Heart right ventricle (tissue), 16 donors: ENCODE measurements at regions of chr4 and their contacts with region 1.

Region 1: GRCh38 chr4:65393078-65393477 is 277.2 kb downstream of the EPHA5 start:
- DNase-seq: no peak
- ATAC-seq: no peak
- H3K4me3 ChIP-seq: no peak overlapping the region
- H3K27ac ChIP-seq: no peak overlapping the region
- H3K4me1 ChIP-seq: no peaks in the 10 kb centered on the region
- H3K27me3 ChIP-seq: no peaks in the 10 kb centered on the region
- CTCF ChIP-seq: no peak

Region 2: DNA sequence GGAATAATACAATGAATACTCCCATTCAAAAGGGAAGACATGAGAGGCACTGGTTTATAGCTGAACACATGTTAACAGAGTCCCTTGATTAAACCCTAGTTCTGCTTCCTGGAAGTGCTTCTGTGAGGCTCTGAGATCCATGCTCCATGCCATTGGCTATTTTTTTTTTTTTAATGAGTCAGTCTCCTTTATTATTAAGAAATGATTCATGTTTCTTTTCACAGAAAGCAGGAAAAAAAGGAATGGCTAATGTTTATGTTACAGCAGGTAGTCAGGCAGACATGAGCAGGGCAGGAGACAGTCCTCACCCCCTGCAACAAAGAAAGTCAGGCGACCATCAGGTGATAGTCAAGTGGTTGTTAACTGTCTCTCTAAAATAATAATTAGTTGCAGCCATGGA is 321.5 kb before region 1 on chr4:
- intact Hi-C with region 1: no loop called
- DNase-seq: no peak
- ATAC-seq: no peak
- H3K4me3 ChIP-seq: no peak overlapping the region
- H3K27ac ChIP-seq: no peak overlapping the region
- H3K4me1 ChIP-seq: no peaks in the 10 kb centered on the region
- H3K27me3 ChIP-seq: no peaks in the 10 kb centered on the region
- CTCF ChIP-seq: no peak

Region 3: GRCh38 chr4:65407483-65407882 is 14.4 kb after region 1 on chr4:
- intact Hi-C with region 1: loop called in 1 of 10 experiments (anchors 1 kb)
- DNase-seq: no peak
- ATAC-seq: no peak
- H3K4me3 ChIP-seq: no peak overlapping the region
- H3K27ac ChIP-seq: no peak overlapping the region
- H3K4me1 ChIP-seq: no peaks in the 10 kb centered on the region
- H3K27me3 ChIP-seq: no peaks in the 10 kb centered on the region
- CTCF ChIP-seq: no peak

Region 4: GRCh38 chr4:65521666-65522065 is 128.6 kb after region 1 on chr4:
- intact Hi-C with region 1: no loop called
- DNase-seq: no peak
- ATAC-seq: no peak
- H3K4me3 ChIP-seq: no peak overlapping the region
- H3K27ac ChIP-seq: no peak overlapping the region
- H3K4me1 ChIP-seq: no peaks in the 10 kb centered on the region
- H3K27me3 ChIP-seq: no peaks in the 10 kb centered on the region
- CTCF ChIP-seq: no peak